ENCODE measurements at regions of chr15 and their contacts with region 1.

Region 1: DNA sequence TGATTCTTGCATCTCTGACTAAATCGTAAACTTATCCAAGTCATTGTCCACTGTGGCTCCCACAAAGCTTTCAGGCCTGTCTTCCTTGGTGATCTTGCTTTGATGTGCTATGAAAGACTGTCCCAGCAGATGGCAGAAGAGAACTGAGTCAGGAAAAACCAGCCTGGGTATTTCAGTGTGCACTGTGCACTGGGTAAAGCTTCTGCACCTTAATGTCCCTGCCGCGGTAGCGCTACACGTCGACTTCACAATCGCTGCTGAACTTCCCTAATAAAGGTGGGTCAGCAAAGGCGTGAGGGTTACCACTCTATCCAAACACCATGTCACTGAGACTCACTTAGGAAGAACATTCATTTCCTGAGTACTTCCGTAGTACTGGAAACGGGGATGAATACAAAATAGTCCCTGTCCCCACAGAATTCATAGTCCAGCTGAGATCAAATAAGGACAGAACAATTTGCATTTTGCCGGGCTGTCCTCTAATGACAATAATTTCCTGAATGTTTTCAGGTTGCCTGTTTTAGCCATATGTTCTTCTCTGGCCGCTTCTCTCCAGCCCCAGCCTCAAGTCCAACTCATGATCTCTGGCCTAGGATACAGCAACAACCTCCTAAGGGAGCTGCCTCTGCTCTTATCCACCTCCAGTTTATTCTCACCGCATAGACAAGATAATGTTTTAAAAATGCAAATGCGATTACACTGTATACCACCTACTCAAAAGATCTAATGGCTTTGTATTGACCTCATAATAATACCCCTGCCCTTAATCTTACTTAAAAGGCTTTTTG is 83.6 kb upstream of the AKAP13 start:
- DNase-seq: peak; percentile 44 to 86 (median 58)
- ATAC-seq: peak; percentile 99
- H3K4me3 ChIP-seq: no peak overlapping the region
- H3K4me3 Mint-ChIP-seq: peak overlapping the region; percentile 14
- H3K27ac ChIP-seq: no peak overlapping the region
- H3K27ac Mint-ChIP-seq: no peak overlapping the region
- H3K4me1 ChIP-seq: peaks cover 6% of the 10 kb centered on the region
- H3K4me1 Mint-ChIP-seq: peaks cover 13% of the 10 kb centered on the region
- H3K27me3 ChIP-seq: no peaks in the 10 kb centered on the region
- H3K27me3 Mint-ChIP-seq: no peaks in the 10 kb centered on the region
- CTCF ChIP-seq: peak; percentile 74

Region 2: DNA sequence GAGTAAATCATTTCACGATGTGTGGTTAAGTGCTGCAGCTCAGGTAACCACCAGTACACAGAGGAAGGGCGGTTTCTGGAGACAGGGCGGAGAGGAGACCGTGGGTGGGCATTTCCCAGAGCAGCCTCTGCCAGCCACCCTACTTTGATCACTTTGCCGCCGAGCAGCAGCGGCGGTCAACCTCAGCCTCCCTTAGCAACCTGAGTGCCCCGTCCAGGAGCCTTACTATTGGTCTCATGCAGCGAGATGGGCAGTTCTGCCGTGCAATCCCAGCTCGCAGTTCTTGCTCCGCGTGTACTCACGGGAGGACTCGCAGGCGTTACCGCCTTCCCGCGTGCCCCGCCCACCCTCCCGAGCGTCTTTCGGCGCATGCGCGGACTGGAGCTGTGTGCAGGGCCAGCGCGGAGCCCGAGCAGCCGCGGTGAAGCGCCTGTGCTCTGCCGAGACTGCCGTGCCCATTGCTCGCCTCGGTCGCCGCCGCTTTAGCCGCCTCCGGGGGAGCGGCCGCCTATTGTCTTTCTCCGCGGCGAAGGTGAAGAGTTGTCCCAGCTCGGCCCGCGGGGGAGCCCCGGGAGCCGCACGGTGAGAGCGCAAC is 83.5 kb after region 1 on chr15 and contains the start of gene AKAP13:
- CTCF ChIA-PET with region 1: interaction called, 12 read pairs
- POLR2A ChIA-PET with region 1: interaction called, 5 read pairs
- intact Hi-C with region 1: no loop called
- DNase-seq: peak; percentile 81 to 99 (median 92)
- ATAC-seq: peak; percentile 74
- H3K4me3 ChIP-seq: peak within 1 kb of the TSS; percentile 67
- H3K4me3 Mint-ChIP-seq: peak within 1 kb of the TSS; percentile 92
- H3K27ac ChIP-seq: peak within 1 kb of the TSS; percentile 63 to 74
- H3K27ac Mint-ChIP-seq: peak within 1 kb of the TSS; percentile 88
- H3K4me1 ChIP-seq: peaks cover 36% of the 10 kb centered on the region
- H3K4me1 Mint-ChIP-seq: peaks cover 46% of the 10 kb centered on the region
- H3K27me3 ChIP-seq: no peaks in the 10 kb centered on the region
- H3K27me3 Mint-ChIP-seq: no peaks in the 10 kb centered on the region
- CTCF ChIP-seq: no peak
- total RNA-seq, gene AKAP13: 282 to 304 TPM

Region 3: DNA sequence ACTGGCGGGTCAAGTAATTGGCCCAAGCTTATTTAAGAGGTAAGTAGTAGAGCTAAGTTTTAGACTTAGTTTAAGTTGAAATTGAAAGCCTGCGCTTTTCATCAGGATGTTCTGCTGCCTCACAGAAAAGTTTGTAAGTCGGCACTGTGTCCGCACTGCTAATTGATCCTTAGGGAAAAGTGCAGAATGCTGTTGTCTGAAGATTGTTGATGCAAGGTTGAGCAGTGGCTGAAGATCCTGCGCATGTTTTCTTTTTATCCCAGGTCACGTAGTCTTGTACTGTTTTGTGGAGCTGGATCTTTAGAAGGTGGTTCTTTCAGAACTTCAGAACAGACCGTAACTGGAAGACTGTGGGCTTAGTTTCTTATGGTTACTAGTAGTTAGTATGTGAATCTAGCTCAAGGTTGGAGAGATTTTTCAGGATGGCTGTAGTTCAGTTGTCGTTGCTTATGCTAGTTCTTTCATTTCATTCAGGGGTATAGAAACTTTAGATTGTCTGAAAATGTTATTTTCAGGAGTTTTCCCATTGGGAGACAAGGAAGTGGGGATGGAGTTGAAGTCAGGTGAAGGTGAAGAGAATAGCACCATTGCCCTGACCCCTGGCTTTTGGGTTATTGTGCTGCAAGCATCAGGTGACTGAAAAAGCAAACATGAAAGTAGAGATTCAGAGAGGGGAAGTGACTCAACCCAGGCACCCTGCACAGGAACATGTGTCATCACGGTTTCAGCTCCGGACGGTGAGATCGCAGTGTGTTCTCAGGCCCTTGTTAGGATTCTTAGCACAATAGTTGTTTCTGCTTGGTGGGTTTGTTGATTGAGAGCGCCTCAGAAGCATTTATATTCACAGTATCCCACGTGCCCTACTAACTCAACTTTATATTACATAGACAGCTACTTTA is 116.4 kb after region 1 on chr15:
- CTCF ChIA-PET with region 1: interaction called, 55 read pairs
- POLR2A ChIA-PET with region 1: interaction called, 13 read pairs
- intact Hi-C with region 1: loop called (anchors 1 kb)
- DNase-seq: peak; percentile 45 to 89 (median 66)
- ATAC-seq: peak; percentile 96
- H3K4me3 ChIP-seq: no peak overlapping the region
- H3K4me3 Mint-ChIP-seq: peak overlapping the region; percentile 52
- H3K27ac ChIP-seq: peak overlapping the region; percentile 51 to 68
- H3K27ac Mint-ChIP-seq: peak overlapping the region; percentile 82
- H3K4me1 ChIP-seq: peaks cover 14% of the 10 kb centered on the region
- H3K4me1 Mint-ChIP-seq: peaks cover 64% of the 10 kb centered on the region
- H3K27me3 ChIP-seq: no peaks in the 10 kb centered on the region
- H3K27me3 Mint-ChIP-seq: no peaks in the 10 kb centered on the region
- CTCF ChIP-seq: no peak

Region 4: DNA sequence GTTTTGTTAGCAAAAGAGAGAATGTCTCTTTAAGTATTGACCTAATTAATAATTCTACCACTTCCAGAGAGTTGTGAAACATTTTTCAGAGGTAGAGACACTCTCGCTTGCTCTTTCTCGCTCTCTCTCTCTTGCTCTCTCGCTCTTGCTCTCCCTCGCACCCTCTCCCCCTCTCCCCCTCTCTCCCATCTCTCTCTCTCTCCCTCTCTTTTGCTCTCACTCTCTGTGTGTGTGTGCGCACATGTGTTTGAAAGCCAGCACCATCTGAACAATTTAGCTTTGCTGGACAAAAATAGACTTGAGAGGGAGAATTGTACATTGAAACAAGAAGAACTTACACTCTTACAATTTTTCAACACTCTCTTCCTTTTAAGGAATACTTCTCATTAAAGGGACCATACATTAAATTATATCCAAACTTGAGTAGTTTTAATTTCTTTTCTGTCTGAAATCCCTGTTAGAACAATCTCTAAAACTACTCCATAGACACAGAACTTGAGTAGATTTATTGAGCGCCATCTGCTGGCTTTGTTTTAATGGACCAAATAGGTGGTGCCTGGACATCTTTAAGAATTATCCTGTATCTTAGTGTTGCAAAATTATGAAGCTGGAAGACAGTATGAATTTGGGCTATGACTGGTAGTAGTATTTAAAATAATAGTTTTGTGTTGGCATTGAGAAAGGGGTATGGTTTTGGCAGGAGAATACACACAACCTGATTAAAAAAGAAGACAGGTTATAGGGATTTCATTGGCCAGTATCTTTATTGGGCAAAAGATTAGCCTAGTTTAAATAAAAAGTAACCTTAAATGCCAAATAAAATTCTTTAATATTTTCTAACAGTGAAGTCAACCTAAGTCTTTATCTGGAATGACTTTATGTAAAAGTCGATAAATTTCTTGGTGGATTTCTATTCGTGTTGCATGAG is 208.2 kb after region 1 on chr15:
- CTCF ChIA-PET with region 1: interaction called, 16 read pairs
- POLR2A ChIA-PET with region 1: no interaction called
- intact Hi-C with region 1: loop called (anchors 1 kb)
- DNase-seq: peak in 11 of 14 experiments; percentile 6 to 73 (median 21)
- ATAC-seq: no peak
- H3K4me3 ChIP-seq: no peak overlapping the region
- H3K4me3 Mint-ChIP-seq: no peak overlapping the region
- H3K27ac ChIP-seq: no peak overlapping the region
- H3K27ac Mint-ChIP-seq: no peak overlapping the region
- H3K4me1 ChIP-seq: peaks cover 16% of the 10 kb centered on the region
- H3K4me1 Mint-ChIP-seq: peaks cover 77% of the 10 kb centered on the region
- H3K27me3 ChIP-seq: no peaks in the 10 kb centered on the region
- H3K27me3 Mint-ChIP-seq: no peaks in the 10 kb centered on the region
- CTCF ChIP-seq: peak; percentile 75

Region 5: GRCh38 chr15:85840065-85840801 is 543.4 kb after region 1 on chr15:
- CTCF ChIA-PET with region 1: no interaction called
- POLR2A ChIA-PET with region 1: no interaction called
- intact Hi-C with region 1: loop called in 1 of 2 experiments (anchors 5 kb)
- DNase-seq: peak; percentile 56 to 88 (median 74)
- ATAC-seq: peak; percentile 96
- H3K4me3 ChIP-seq: peak overlapping the region; percentile 33
- H3K4me3 Mint-ChIP-seq: peak overlapping the region; percentile 54
- H3K27ac ChIP-seq: no peak overlapping the region
- H3K27ac Mint-ChIP-seq: no peak overlapping the region
- H3K4me1 ChIP-seq: peaks cover 10% of the 10 kb centered on the region
- H3K4me1 Mint-ChIP-seq: no peaks in the 10 kb centered on the region
- H3K27me3 ChIP-seq: no peaks in the 10 kb centered on the region
- H3K27me3 Mint-ChIP-seq: peaks cover 17% of the 10 kb centered on the region
- CTCF ChIP-seq: peak; percentile 97

Measured in CD4-positive, alpha-beta T cell (primary cell).